ENCODE measurements at regions of chr20 and their contacts with region 1.

Region 1: GRCh38 chr20:44210422-44211176 is at the start of gene OSER1:
- DNase-seq: peak; percentile 99
- ATAC-seq: peak; percentile 80
- H3K4me3 ChIP-seq: peak within 1 kb of the TSS; percentile 74 to 100 (median 96)
- H3K4me3 Mint-ChIP-seq: peak within 1 kb of the TSS; percentile 88
- H3K27ac ChIP-seq: peak within 1 kb of the TSS; percentile 95 to 99
- H3K27ac Mint-ChIP-seq: peak within 1 kb of the TSS; percentile 99
- H3K4me1 ChIP-seq: peaks cover 36 to 43% of the 10 kb centered on the region in 2 donors
- H3K4me1 Mint-ChIP-seq: peaks cover 60% of the 10 kb centered on the region
- H3K27me3 ChIP-seq: no peaks in the 10 kb centered on the region
- H3K27me3 Mint-ChIP-seq: no peaks in the 10 kb centered on the region
- CTCF ChIP-seq: no peak
- total RNA-seq, gene OSER1: 80.0 and 85.4 TPM in 2 replicates

Region 2: DNA sequence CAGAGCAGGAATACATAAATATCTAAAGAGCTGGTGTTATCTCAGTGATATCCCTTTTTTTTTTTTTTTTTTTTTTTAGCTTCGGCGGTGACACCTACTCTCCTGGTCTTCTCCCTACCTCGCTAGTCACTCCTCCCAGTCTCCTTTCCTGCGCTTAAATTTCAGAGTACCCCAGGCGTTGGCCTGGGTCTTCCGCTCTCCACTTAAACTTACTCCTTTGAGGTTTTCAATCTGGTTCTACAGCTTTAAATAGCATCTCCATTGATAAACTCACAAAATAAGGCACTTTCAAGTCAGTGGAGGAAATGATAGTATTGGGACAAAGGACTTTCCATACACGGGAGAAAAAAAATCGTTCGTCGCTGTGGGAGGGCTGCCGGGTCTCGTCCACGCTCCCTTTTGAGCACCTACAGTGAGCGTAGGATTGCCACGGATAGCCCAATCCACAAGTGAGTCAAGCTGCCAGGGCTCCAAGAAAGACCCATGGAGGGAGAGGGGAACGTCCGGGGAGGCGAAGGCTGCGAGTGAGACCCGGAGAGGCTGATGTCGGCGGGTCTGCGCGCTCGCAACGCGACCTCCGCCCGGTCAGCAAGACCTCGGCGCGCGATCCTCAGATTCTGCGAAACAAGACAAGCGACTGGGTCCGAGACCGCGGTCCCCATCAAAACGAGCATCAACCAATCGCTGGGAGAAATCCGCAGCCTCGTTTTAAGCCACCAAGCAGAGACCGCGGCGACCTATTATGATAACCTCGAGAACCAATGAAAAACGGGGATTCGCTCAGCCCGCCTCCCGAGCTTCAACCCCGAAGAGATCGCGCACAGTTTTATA is 753.6 kb before region 1 on chr20:
- CTCF ChIA-PET with region 1: no interaction called
- POLR2A ChIA-PET with region 1: no interaction called
- intact Hi-C with region 1: loop called (anchors 1 kb)
- DNase-seq: peak; percentile 94
- ATAC-seq: peak; percentile 78
- H3K4me3 ChIP-seq: peak overlapping the region; percentile 84 to 98 (median 95)
- H3K4me3 Mint-ChIP-seq: peak overlapping the region; percentile 89
- H3K27ac ChIP-seq: peak overlapping the region; percentile 99 to 100
- H3K27ac Mint-ChIP-seq: peak overlapping the region; percentile 96
- H3K4me1 ChIP-seq: peaks cover 11 to 13% of the 10 kb centered on the region in 2 donors
- H3K4me1 Mint-ChIP-seq: peaks cover 27% of the 10 kb centered on the region
- H3K27me3 ChIP-seq: no peaks in the 10 kb centered on the region
- H3K27me3 Mint-ChIP-seq: peaks cover 12% of the 10 kb centered on the region
- CTCF ChIP-seq: no peak

Region 3: GRCh38 chr20:43681468-43681942 is 529.1 kb before region 1 on chr20:
- CTCF ChIA-PET with region 1: no interaction called
- POLR2A ChIA-PET with region 1: interaction called, 3 read pairs
- intact Hi-C with region 1: loop called (anchors 1 kb)
- DNase-seq: peak; percentile 83
- ATAC-seq: peak; percentile 37
- H3K4me3 ChIP-seq: peak overlapping the region; percentile 11 to 68 (median 43)
- H3K4me3 Mint-ChIP-seq: peak overlapping the region; percentile 70
- H3K27ac ChIP-seq: peak overlapping the region; percentile 98 to 99
- H3K27ac Mint-ChIP-seq: peak overlapping the region; percentile 97
- H3K4me1 ChIP-seq: peaks cover 38 to 60% of the 10 kb centered on the region in 2 donors
- H3K4me1 Mint-ChIP-seq: peaks cover 51% of the 10 kb centered on the region
- H3K27me3 ChIP-seq: no peaks in the 10 kb centered on the region
- H3K27me3 Mint-ChIP-seq: no peaks in the 10 kb centered on the region
- CTCF ChIP-seq: peak; percentile 51

Region 4: DNA sequence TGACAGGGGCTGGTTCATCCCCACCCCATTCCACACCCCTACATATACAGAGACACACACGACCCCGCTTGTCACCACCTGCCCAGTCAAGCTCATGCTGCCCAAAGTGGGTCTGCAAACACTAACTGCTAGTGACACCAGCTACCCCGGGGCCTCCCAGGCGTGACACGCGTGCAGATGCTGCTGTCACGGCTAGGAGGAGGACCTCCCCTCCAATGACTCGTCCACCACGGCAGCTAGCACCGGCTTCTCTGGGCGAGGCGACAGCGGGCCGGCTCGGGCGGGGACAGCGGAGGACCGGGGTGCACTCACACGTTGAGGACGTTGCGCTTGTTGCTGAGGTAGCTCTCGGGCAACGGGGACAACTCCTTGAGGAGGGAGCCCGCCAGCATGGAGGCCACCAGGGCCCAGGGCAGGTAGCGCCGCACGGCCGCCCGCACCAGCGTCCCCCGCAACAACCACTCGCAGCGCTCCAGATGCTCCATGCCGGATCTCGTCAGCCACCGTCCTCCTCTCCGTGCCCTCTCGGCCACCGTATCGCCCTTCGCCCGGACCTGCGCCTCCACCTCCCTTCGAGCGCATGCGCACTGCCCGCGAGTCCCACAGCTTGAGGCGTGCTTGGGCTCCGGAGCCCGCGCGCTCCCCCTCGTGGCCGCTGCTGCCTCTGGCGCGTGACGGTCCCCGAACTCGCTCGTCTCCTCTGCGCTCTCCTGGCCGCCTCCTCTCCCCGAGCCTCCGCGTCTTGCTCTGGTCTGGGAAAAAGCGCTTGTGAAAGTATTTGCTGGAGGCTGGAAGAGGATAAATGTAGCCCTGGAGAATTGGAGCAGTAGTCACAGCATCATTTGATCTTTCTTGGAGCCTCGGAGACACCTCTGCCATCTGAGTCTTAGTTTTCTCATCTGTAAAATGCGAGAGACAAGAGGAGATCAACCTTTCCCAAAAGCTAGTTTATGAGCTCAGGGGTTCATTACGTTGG is 100.4 kb after region 1 on chr20 and contains the start of gene FITM2:
- CTCF ChIA-PET with region 1: interaction called, 216 read pairs
- POLR2A ChIA-PET with region 1: interaction called, 3 read pairs
- intact Hi-C with region 1: loop called (anchors 1 kb)
- DNase-seq: peak; percentile 98
- ATAC-seq: peak; percentile 97
- H3K4me3 ChIP-seq: peak within 1 kb of the TSS; percentile 62 to 96 (median 95)
- H3K4me3 Mint-ChIP-seq: peak within 1 kb of the TSS; percentile 95
- H3K27ac ChIP-seq: peak within 1 kb of the TSS in 1 of 2 donors; percentile 22
- H3K27ac Mint-ChIP-seq: peak within 1 kb of the TSS; percentile 96
- H3K4me1 ChIP-seq: peaks cover 10 to 16% of the 10 kb centered on the region in 2 donors
- H3K4me1 Mint-ChIP-seq: peaks cover 22% of the 10 kb centered on the region
- H3K27me3 ChIP-seq: no peaks in the 10 kb centered on the region
- H3K27me3 Mint-ChIP-seq: peaks cover 5% of the 10 kb centered on the region
- CTCF ChIP-seq: peak; percentile 97
- total RNA-seq, gene FITM2: 4.0 and 4.3 TPM in 2 replicates

Region 5: GRCh38 chr20:44582311-44583025 is 371.9 kb after region 1 on chr20 and contains the start of gene PKIG:
- CTCF ChIA-PET with region 1: no interaction called
- POLR2A ChIA-PET with region 1: no interaction called
- intact Hi-C with region 1: loop called (anchors 10 kb)
- DNase-seq: peak; percentile 57
- ATAC-seq: no peak
- H3K4me3 ChIP-seq: peak within 1 kb of the TSS; percentile 57 to 94 (median 76)
- H3K4me3 Mint-ChIP-seq: peak within 1 kb of the TSS; percentile 92
- H3K27ac ChIP-seq: peak within 1 kb of the TSS; percentile 85 to 89
- H3K27ac Mint-ChIP-seq: peak within 1 kb of the TSS; percentile 91
- H3K4me1 ChIP-seq: peaks cover 68 to 79% of the 10 kb centered on the region in 2 donors
- H3K4me1 Mint-ChIP-seq: peaks cover 86% of the 10 kb centered on the region
- H3K27me3 ChIP-seq: no peaks in the 10 kb centered on the region
- H3K27me3 Mint-ChIP-seq: no peaks in the 10 kb centered on the region
- CTCF ChIP-seq: no peak
- total RNA-seq, gene PKIG: 117 and 128 TPM in 2 replicates